ENCODE measurements at regions of chr14 and their contacts with region 1.

Region 1: GRCh38 chr14:54893151-54893760 is 9.4 kb downstream of the GCH1 start:
- H3K4me3 Mint-ChIP-seq: no peak overlapping the region
- H3K27ac Mint-ChIP-seq: no peak overlapping the region
- H3K4me1 Mint-ChIP-seq: peaks cover 40% of the 10 kb centered on the region
- H3K27me3 Mint-ChIP-seq: no peaks in the 10 kb centered on the region

Region 2: GRCh38 chr14:54857830-54858269 is 35.4 kb before region 1 on chr14:
- intact Hi-C with region 1: loop called (anchors 5 kb)
- H3K4me3 Mint-ChIP-seq: no peak overlapping the region
- H3K27ac Mint-ChIP-seq: peak overlapping the region; percentile 74
- H3K4me1 Mint-ChIP-seq: peaks cover 34% of the 10 kb centered on the region
- H3K27me3 Mint-ChIP-seq: no peaks in the 10 kb centered on the region